Activated B cell treated with CpG ODN at 0.5 μM for 24 hours (primary cell): ENCODE measurements at regions of chr7 and their contacts with region 1.

Region 1: GRCh38 chr7:99408379-99409191 is at the starts of genes BUD31 and PDAP1:
- DNase-seq: peak; percentile 96
- ATAC-seq: peak; percentile 88
- H3K4me3 Mint-ChIP-seq: peak within 1 kb of the TSS; percentile 100
- H3K27ac Mint-ChIP-seq: peak within 1 kb of the TSS; percentile 99
- H3K4me1 Mint-ChIP-seq: peaks cover 55% of the 10 kb centered on the region
- H3K27me3 Mint-ChIP-seq: no peaks in the 10 kb centered on the region
- CTCF ChIP-seq: no peak
- total RNA-seq, gene BUD31: 93.7 and 113 TPM in 2 replicates
- total RNA-seq, gene PDAP1: 105 and 134 TPM in 2 replicates

Region 2: DNA sequence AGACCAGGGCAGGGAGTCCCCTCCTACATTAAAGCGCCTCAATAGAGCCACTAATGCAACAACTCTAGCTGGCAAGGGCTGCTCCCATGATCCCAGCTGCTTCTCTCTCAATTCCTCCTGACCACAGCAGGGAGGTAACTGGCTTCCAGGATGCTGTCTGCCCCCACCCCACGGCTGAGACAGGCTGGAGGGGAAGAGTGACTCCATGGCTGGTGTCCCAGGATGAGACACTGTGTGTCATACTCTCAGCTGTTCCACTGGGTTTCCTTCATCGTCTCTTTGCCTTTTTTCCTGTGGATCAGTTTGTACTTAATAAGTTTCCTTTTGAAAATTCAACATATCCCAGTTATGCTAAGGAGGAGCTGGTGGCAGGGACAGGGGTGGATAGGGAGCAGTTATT is 163.6 kb before region 1 on chr7:
- CTCF ChIA-PET with region 1: no interaction called
- POLR2A ChIA-PET with region 1: no interaction called
- intact Hi-C with region 1: no loop called
- DNase-seq: no peak
- ATAC-seq: no peak
- H3K4me3 Mint-ChIP-seq: no peak overlapping the region
- H3K27ac Mint-ChIP-seq: no peak overlapping the region
- H3K4me1 Mint-ChIP-seq: no peaks in the 10 kb centered on the region
- H3K27me3 Mint-ChIP-seq: peaks cover 5% of the 10 kb centered on the region
- CTCF ChIP-seq: no peak

Region 3: DNA sequence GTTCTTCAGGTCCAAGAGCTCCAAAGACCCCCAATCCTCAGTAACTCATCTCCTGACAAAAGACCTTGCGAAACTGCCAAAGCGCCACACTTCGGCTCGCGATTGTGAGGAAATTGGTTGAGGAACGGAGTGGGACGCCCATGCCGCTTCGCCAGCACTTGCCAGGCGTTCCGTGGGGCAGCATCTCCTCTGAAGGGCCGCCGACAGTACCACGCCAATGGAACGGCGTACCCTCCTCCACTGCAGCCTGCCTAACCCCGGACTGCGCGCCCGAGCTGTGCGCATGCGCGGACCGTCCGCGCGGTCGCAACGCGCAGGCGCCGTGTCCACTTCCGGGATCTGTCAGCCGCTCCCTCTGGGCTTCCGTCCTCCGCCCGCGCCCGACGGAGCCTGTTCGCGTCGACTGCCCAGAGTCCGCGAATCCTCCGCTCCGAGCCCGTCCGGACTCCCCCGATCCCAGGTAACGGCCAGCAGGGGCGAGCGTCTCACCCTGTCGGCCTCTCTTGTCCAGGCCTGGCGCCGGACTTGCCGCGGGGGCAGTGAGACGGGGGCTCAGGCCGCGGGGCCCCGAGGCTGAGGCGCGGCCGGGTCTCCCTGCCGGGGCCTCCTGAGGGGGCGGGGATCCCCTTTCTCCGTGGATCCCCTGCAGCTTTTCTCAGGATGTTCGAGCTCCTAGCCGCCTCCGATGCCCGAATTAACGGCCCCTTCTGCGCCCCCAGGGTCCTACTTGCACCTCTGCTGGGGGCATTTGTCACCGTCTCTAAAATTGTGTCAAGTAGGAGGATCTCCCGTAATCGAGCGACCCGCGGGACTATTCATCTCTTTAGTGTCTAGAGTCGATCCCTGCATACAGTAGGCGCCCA is 82.8 kb before region 1 on chr7 and contains the start of gene ARPC1A:
- CTCF ChIA-PET with region 1: no interaction called
- POLR2A ChIA-PET with region 1: interaction called, 10 read pairs
- intact Hi-C with region 1: loop called (anchors 1 kb)
- DNase-seq: peak; percentile 93
- ATAC-seq: peak; percentile 93
- H3K4me3 Mint-ChIP-seq: peak within 1 kb of the TSS; percentile 93
- H3K27ac Mint-ChIP-seq: peak within 1 kb of the TSS; percentile 89
- H3K4me1 Mint-ChIP-seq: peaks cover 42% of the 10 kb centered on the region
- H3K27me3 Mint-ChIP-seq: no peaks in the 10 kb centered on the region
- CTCF ChIP-seq: no peak
- total RNA-seq, gene ARPC1A: 47.3 and 51.6 TPM in 2 replicates

Region 4: GRCh38 chr7:99380032-99380822 is 28.4 kb before region 1 on chr7:
- CTCF ChIA-PET with region 1: interaction called, 4 read pairs
- POLR2A ChIA-PET with region 1: interaction called, 189 read pairs
- intact Hi-C with region 1: loop called (anchors 1 kb)
- DNase-seq: peak; percentile 34
- ATAC-seq: peak; percentile 35
- H3K4me3 Mint-ChIP-seq: peak overlapping the region; percentile 83
- H3K27ac Mint-ChIP-seq: peak overlapping the region; percentile 98
- H3K4me1 Mint-ChIP-seq: peaks cover 71% of the 10 kb centered on the region
- H3K27me3 Mint-ChIP-seq: no peaks in the 10 kb centered on the region
- CTCF ChIP-seq: no peak

Region 5: GRCh38 chr7:99422186-99422585 is 13.6 kb after region 1 on chr7:
- CTCF ChIA-PET with region 1: no interaction called
- POLR2A ChIA-PET with region 1: interaction called, 17 read pairs
- intact Hi-C with region 1: no loop called
- DNase-seq: no peak
- ATAC-seq: no peak
- H3K4me3 Mint-ChIP-seq: no peak overlapping the region
- H3K27ac Mint-ChIP-seq: no peak overlapping the region
- H3K4me1 Mint-ChIP-seq: no peaks in the 10 kb centered on the region
- H3K27me3 Mint-ChIP-seq: no peaks in the 10 kb centered on the region
- CTCF ChIP-seq: no peak

Region 6: DNA sequence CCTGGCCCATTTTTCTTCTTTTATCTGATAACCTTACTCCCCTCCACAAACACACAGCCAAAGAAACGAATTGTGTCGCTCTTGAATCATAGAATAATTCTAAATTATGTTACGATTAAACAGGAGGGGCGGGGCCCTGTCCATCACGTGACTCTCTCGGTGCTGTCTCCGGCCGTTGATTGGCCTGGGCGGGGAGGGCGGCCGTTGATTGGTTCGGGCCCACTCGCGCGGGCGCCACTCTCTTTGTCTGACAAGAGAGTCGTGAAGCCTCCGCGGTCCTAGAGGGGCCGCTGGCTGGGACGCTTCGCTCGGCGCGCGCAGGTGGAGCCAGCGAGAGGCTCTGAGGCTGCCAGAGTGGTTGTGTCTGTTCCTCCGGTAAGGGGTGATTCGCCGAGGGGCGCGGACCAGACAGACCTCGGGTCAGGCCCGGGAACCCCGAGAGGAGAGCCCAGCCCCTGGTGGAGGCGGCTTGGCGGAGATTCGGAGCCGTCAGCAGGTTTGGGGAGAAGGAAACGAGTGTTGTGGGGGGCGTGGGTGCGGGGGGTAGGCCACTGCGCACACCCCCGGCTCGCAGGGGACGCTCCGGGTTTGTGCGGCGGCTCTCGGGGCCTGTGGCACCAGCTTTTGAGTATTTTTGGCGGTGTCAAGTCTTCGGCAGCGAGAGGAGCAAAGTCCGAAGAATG is 64.1 kb after region 1 on chr7 and contains the start of gene ZNF789:
- CTCF ChIA-PET with region 1: no interaction called
- POLR2A ChIA-PET with region 1: interaction called, 7 read pairs
- intact Hi-C with region 1: loop called (anchors 1 kb)
- DNase-seq: peak; percentile 90
- ATAC-seq: peak; percentile 97
- H3K4me3 Mint-ChIP-seq: peak within 1 kb of the TSS; percentile 98
- H3K27ac Mint-ChIP-seq: peak within 1 kb of the TSS; percentile 93
- H3K4me1 Mint-ChIP-seq: peaks cover 25% of the 10 kb centered on the region
- H3K27me3 Mint-ChIP-seq: no peaks in the 10 kb centered on the region
- CTCF ChIP-seq: no peak
- total RNA-seq, gene ZNF789: 24.5 and 38.3 TPM in 2 replicates

Region 7: GRCh38 chr7:99558306-99559174 is 150.0 kb after region 1 on chr7 and contains the start of gene ZNF655:
- CTCF ChIA-PET with region 1: no interaction called
- POLR2A ChIA-PET with region 1: interaction called, 34 read pairs
- intact Hi-C with region 1: loop called (anchors 2 kb)
- DNase-seq: peak; percentile 85
- ATAC-seq: peak; percentile 79
- H3K4me3 Mint-ChIP-seq: peak within 1 kb of the TSS; percentile 97
- H3K27ac Mint-ChIP-seq: peak within 1 kb of the TSS; percentile 97
- H3K4me1 Mint-ChIP-seq: peaks cover 49% of the 10 kb centered on the region
- H3K27me3 Mint-ChIP-seq: no peaks in the 10 kb centered on the region
- CTCF ChIP-seq: no peak
- total RNA-seq, gene ZNF655: 98.5 and 116 TPM in 2 replicates

Region 8: GRCh38 chr7:100003711-100004661 is 595.4 kb after region 1 on chr7:
- CTCF ChIA-PET with region 1: no interaction called
- POLR2A ChIA-PET with region 1: no interaction called
- intact Hi-C with region 1: no loop called
- DNase-seq: no peak
- ATAC-seq: no peak
- H3K4me3 Mint-ChIP-seq: no peak overlapping the region
- H3K27ac Mint-ChIP-seq: no peak overlapping the region
- H3K4me1 Mint-ChIP-seq: no peaks in the 10 kb centered on the region
- H3K27me3 Mint-ChIP-seq: no peaks in the 10 kb centered on the region
- CTCF ChIP-seq: no peak